ENCODE measurements at regions of chr19 and their contacts with region 1.

Region 1: GRCh38 chr19:43519436-43520088 is 7.4 kb downstream of the ETHE1 start:
- DNase-seq: peak; percentile 57 to 88 (median 82)
- ATAC-seq: peak; percentile 95
- H3K4me3 ChIP-seq: no peak overlapping the region
- H3K4me3 Mint-ChIP-seq: no peak overlapping the region
- H3K27ac ChIP-seq: no peak overlapping the region
- H3K27ac Mint-ChIP-seq: no peak overlapping the region
- H3K4me1 ChIP-seq: peaks cover 10% of the 10 kb centered on the region
- H3K4me1 Mint-ChIP-seq: peaks cover 13% of the 10 kb centered on the region
- H3K27me3 ChIP-seq: no peaks in the 10 kb centered on the region
- H3K27me3 Mint-ChIP-seq: no peaks in the 10 kb centered on the region
- CTCF ChIP-seq: peak; percentile 87

Region 2: GRCh38 chr19:43265664-43266025 is 253.9 kb before region 1 on chr19:
- CTCF ChIA-PET with region 1: no interaction called
- POLR2A ChIA-PET with region 1: no interaction called
- intact Hi-C with region 1: loop called in 1 of 2 experiments (anchors 10 kb)
- DNase-seq: no peak
- ATAC-seq: no peak
- H3K4me3 ChIP-seq: no peak overlapping the region
- H3K4me3 Mint-ChIP-seq: no peak overlapping the region
- H3K27ac ChIP-seq: no peak overlapping the region
- H3K27ac Mint-ChIP-seq: no peak overlapping the region
- H3K4me1 ChIP-seq: no peaks in the 10 kb centered on the region
- H3K4me1 Mint-ChIP-seq: no peaks in the 10 kb centered on the region
- H3K27me3 ChIP-seq: no peaks in the 10 kb centered on the region
- H3K27me3 Mint-ChIP-seq: peaks cover 6% of the 10 kb centered on the region
- CTCF ChIP-seq: no peak

Region 3: DNA sequence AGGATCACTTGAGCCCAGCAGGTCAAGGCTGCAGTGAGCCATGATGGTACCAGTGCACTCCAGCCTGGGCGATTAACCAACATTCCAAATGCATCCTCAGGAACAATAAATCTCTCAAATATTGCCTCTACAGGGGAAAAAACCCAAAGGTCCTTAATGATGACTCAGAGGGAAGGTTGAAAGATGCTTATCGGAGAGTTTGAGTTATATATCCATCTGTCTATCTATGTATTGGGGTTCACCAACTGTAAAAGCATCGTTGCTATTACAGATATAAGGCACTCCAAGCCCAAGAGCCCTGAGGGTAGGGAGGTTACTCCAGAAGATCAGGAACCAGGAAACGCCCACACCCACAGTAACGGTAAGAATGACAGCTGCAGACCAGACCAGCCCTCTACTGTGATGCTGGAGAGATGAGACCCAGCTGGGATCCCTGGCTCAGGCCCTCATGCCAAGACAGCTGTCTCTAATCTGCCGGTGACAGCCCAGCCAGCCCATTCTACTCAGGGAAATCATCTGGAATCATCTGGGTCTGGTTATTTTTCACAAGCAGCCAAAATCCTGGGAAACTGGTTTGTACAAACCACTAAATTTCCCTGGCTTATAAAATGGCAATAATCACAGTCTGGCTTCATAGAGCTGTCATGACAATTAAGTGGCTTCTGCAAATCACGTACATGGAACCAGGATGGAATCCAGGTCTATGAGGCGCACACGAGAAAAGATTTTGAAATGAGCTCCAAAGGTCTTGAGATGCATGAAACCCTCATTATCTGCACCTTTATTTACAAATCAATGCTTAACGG is 81.1 kb before region 1 on chr19:
- CTCF ChIA-PET with region 1: interaction called, 369 read pairs
- POLR2A ChIA-PET with region 1: interaction called, 9 read pairs
- intact Hi-C with region 1: loop called (anchors 1 kb)
- DNase-seq: peak in 3 of 9 experiments; percentile 16 to 33 (median 22)
- ATAC-seq: peak; percentile 25
- H3K4me3 ChIP-seq: peak overlapping the region in 1 of 2 experiments; percentile 10
- H3K4me3 Mint-ChIP-seq: peak overlapping the region; percentile 44
- H3K27ac ChIP-seq: peak overlapping the region; percentile 64 to 88
- H3K27ac Mint-ChIP-seq: peak overlapping the region; percentile 96
- H3K4me1 ChIP-seq: peaks cover 33% of the 10 kb centered on the region
- H3K4me1 Mint-ChIP-seq: peaks cover 56% of the 10 kb centered on the region
- H3K27me3 ChIP-seq: no peaks in the 10 kb centered on the region
- H3K27me3 Mint-ChIP-seq: no peaks in the 10 kb centered on the region
- CTCF ChIP-seq: no peak

Region 4: DNA sequence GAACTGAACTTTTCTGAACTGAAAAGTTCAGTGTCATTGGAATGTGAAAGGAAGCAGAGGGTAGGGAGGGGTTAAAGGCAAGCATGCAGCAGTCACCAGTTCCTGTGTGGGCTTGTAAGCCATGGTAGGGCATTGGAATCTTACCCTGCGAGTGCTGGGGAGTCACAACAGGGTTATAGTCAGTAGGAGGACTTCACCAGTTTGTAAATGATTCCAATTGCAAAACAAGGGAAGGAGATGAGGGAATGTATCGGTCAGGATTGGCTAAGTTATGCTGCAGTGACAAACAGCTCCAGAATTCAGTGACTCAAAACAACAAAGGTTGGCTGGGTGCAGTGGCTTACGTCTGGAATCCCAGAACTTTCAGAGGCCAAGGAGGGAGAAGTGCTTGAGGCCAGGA is 67.0 kb before region 1 on chr19:
- CTCF ChIA-PET with region 1: interaction called, 369 read pairs
- POLR2A ChIA-PET with region 1: interaction called, 36 read pairs
- intact Hi-C with region 1: loop called (anchors 1 kb)
- DNase-seq: no peak
- ATAC-seq: no peak
- H3K4me3 ChIP-seq: no peak overlapping the region
- H3K4me3 Mint-ChIP-seq: no peak overlapping the region
- H3K27ac ChIP-seq: no peak overlapping the region
- H3K27ac Mint-ChIP-seq: no peak overlapping the region
- H3K4me1 ChIP-seq: no peaks in the 10 kb centered on the region
- H3K4me1 Mint-ChIP-seq: peaks cover 2% of the 10 kb centered on the region
- H3K27me3 ChIP-seq: no peaks in the 10 kb centered on the region
- H3K27me3 Mint-ChIP-seq: no peaks in the 10 kb centered on the region
- CTCF ChIP-seq: no peak

Region 5: DNA sequence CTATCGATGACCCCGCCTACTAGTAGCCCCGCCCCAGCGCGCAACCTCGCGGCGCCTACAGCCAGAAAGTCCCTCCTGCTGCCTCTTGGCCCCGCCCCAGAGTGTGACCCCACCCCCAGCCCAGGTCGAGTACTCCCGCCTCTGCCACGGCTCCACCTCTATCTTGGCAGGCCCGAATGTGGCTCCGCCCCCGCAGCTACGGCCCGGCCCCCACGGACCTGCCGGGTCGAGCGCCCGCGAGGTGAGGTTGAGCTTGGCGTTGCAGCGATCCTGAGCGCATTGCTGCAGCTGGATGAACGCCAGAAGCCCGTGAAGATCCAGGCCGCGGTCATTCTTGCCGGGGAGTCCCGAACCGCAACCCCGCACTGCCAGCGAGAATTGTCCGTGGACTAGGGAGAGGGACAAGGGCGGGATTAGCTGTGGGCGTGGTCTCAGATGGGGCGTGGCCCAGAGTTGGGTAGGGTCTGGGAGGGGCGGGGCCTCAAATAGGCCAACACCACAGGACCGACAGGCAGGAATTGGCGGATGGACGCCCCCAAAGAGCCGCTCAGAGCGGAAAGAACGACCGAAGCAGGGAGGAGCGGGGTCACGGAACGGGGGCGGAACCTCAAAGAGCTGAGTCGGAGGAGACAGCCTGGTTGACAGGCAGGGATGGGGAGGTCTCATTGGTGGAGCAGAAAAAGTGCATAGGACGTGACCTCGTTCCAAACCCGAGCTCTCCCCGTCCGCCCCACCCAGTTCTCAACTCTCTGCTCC is 56.0 kb before region 1 on chr19:
- CTCF ChIA-PET with region 1: interaction called, 27 read pairs
- POLR2A ChIA-PET with region 1: interaction called, 10 read pairs
- intact Hi-C with region 1: no loop called
- DNase-seq: peak; percentile 99 to 100 (median 99)
- ATAC-seq: peak; percentile 79
- H3K4me3 ChIP-seq: peak overlapping the region; percentile 75 to 89
- H3K4me3 Mint-ChIP-seq: peak overlapping the region; percentile 93
- H3K27ac ChIP-seq: peak overlapping the region; percentile 85 to 91
- H3K27ac Mint-ChIP-seq: peak overlapping the region; percentile 98
- H3K4me1 ChIP-seq: peaks cover 29% of the 10 kb centered on the region
- H3K4me1 Mint-ChIP-seq: peaks cover 53% of the 10 kb centered on the region
- H3K27me3 ChIP-seq: no peaks in the 10 kb centered on the region
- H3K27me3 Mint-ChIP-seq: no peaks in the 10 kb centered on the region
- CTCF ChIP-seq: no peak

Region 6: GRCh38 chr19:43503501-43504425 is 15.8 kb before region 1 on chr19:
- CTCF ChIA-PET with region 1: interaction called, 19 read pairs
- POLR2A ChIA-PET with region 1: interaction called, 4 read pairs
- intact Hi-C with region 1: loop called (anchors 1 kb)
- DNase-seq: peak; percentile 98 to 100 (median 99)
- ATAC-seq: peak; percentile 95
- H3K4me3 ChIP-seq: peak overlapping the region; percentile 97
- H3K4me3 Mint-ChIP-seq: peak overlapping the region; percentile 97
- H3K27ac ChIP-seq: peak overlapping the region; percentile 84 to 86
- H3K27ac Mint-ChIP-seq: peak overlapping the region; percentile 96
- H3K4me1 ChIP-seq: peaks cover 19% of the 10 kb centered on the region
- H3K4me1 Mint-ChIP-seq: peaks cover 34% of the 10 kb centered on the region
- H3K27me3 ChIP-seq: no peaks in the 10 kb centered on the region
- H3K27me3 Mint-ChIP-seq: no peaks in the 10 kb centered on the region
- CTCF ChIP-seq: no peak

Region 7: DNA sequence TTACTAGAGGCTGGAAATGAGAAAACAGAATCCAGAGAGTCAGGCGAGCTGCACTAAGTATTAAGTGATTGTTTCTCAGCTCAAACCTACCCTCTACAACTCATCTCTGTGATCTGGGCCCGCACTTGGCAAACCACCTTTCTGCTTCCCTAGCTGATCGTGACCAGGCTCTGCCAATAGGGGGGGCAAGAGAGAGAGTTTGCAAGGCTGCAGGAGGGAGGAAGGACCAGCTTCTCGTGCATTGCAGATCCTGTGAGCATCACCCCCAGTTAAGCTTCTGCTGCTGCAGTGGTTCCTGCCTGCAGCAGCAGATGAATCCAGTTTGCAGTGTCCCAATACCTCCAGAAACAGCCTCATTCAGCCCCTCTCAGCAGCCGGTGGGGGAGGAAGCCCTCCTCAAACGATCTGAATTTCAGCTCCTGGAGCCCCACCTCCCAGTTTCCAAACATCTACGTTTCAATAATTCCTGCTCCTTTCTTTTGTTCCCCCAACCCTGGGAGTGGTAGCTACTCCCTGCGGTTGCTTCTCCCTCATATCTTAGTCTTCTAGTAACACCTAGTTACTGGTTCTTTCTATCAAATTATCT is 35.7 kb after region 1 on chr19:
- CTCF ChIA-PET with region 1: interaction called, 19 read pairs
- POLR2A ChIA-PET with region 1: no interaction called
- intact Hi-C with region 1: no loop called
- DNase-seq: peak; percentile 71 to 90 (median 86)
- ATAC-seq: peak; percentile 100
- H3K4me3 ChIP-seq: no peak overlapping the region
- H3K4me3 Mint-ChIP-seq: no peak overlapping the region
- H3K27ac ChIP-seq: no peak overlapping the region
- H3K27ac Mint-ChIP-seq: no peak overlapping the region
- H3K4me1 ChIP-seq: peaks cover 7% of the 10 kb centered on the region
- H3K4me1 Mint-ChIP-seq: peaks cover 17% of the 10 kb centered on the region
- H3K27me3 ChIP-seq: no peaks in the 10 kb centered on the region
- H3K27me3 Mint-ChIP-seq: no peaks in the 10 kb centered on the region
- CTCF ChIP-seq: peak; percentile 79